Naive thymus-derived CD4-positive, alpha-beta T cell (primary cell): ENCODE measurements at regions of chr18 and their contacts with region 1.

Region 1: DNA sequence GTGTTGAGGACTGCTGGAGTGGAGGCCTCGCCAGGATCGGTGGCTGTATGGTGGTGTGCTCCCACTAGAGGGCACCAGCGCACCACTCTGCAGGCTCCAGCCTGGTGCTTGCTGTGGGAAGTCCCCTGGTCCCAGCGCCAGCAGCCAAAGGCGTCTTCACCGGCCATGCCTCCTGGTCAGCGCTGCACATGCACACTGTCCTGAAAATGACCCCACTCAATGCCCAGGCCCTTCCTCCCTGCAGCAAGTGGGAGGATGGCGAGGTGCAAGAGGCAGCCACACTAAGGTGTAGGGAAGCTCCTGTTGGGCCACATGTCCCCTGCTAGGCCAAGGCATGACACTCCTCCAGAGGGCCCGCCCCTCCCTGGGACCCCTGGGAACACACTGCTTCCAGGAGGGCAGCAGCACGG is 136.5 kb downstream of the CTIF start:
- DNase-seq: peak; percentile 57 to 84 (median 78)
- ATAC-seq: peak; percentile 97
- H3K4me3 ChIP-seq: no peak overlapping the region
- H3K4me3 Mint-ChIP-seq: no peak overlapping the region
- H3K27ac ChIP-seq: no peak overlapping the region
- H3K27ac Mint-ChIP-seq: no peak overlapping the region
- H3K4me1 ChIP-seq: no peaks in the 10 kb centered on the region
- H3K4me1 Mint-ChIP-seq: peaks cover 0 to 12% (median 0%) of the 10 kb centered on the region in 7 donors
- H3K27me3 ChIP-seq: no peaks in the 10 kb centered on the region
- H3K27me3 Mint-ChIP-seq: no peaks in the 10 kb centered on the region

Region 2: DNA sequence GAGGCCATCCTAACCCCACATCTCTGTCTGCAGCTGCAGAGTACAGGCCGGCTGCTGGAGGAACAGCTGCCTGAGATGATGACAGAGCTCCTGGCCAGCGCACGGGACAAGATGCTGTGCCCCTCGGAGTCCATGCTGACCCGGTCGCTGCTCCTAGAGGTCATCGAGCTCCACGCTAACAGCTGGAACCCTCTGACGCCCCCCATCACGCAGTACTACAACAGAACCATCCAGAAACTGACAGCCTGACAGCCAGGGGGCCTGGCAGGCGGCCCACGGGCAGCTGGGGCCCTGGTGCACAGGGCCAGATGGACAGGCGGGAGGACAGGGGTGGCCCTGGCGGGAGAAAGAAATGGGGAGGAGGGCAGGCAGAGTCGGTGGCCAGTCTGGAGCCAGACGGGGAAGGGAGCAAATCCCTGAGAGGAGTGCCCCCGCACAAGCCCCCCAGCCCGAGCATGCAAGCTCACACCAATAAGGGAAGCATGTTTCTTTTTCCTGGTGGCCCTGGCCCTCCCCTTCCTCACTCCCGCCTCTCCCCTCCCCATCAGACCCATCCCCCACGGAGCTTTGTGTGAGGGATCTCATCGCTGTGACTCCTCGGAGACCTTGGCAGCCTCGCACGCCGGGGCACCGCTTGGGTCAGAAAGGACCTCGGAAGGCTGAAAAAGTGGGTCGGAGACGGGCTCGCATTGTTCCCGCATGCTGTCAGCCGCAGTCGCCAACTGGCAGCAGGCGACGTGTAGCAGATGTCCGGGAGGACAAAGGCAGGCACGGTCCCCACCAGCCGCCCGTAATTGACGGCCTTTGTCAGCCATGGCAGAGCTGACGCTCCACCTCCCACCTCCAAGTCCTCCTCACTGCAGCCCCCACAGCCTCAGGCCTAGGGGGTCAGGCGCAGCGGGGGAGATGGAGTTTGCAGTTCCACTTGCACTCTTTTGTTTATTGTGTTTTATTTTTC is 184.2 kb after region 1 on chr18:
- CTCF ChIA-PET with region 1: no interaction called
- POLR2A ChIA-PET with region 1: no interaction called
- intact Hi-C with region 1: no loop called
- DNase-seq: no peak
- ATAC-seq: no peak
- H3K4me3 ChIP-seq: no peak overlapping the region
- H3K4me3 Mint-ChIP-seq: no peak overlapping the region
- H3K27ac ChIP-seq: no peak overlapping the region
- H3K27ac Mint-ChIP-seq: peak overlapping the region in 2 of 9 donors; percentile 25 to 43
- H3K4me1 ChIP-seq: no peaks in the 10 kb centered on the region
- H3K4me1 Mint-ChIP-seq: peaks cover 4 to 23% (median 16%) of the 10 kb centered on the region in 7 donors
- H3K27me3 ChIP-seq: no peaks in the 10 kb centered on the region
- H3K27me3 Mint-ChIP-seq: no peaks in the 10 kb centered on the region

Region 3: DNA sequence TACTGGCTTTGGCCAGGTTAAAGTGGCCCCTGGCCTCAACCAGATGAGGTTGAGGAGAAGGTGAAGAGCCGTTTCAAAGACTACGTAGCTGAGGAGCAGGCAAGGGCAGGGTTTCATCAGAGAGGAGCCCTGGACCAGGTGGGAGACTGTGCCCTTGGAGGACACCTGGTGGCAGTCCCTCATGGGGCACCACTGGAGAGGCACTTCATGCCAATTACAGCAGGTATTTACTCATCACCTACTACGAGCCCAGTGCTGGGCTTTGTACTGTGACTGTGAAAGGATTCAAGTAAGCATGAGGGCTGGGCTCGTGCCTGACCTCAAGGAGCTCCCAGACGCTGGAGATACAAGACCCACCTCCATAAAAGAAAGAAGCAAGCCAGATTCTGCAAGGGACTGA is 237.8 kb after region 1 on chr18:
- CTCF ChIA-PET with region 1: no interaction called
- POLR2A ChIA-PET with region 1: no interaction called
- intact Hi-C with region 1: loop called in 1 of 2 experiments (anchors 5 kb)
- DNase-seq: peak in 4 of 9 donors; percentile 32 to 51 (median 44)
- ATAC-seq: peak; percentile 78
- H3K4me3 ChIP-seq: no peak overlapping the region
- H3K4me3 Mint-ChIP-seq: no peak overlapping the region
- H3K27ac ChIP-seq: no peak overlapping the region
- H3K27ac Mint-ChIP-seq: peak overlapping the region in 2 of 9 donors; percentile 28 to 55
- H3K4me1 ChIP-seq: peaks cover 11 to 19% of the 10 kb centered on the region in 2 donors
- H3K4me1 Mint-ChIP-seq: peaks cover 22 to 43% (median 33%) of the 10 kb centered on the region in 7 donors
- H3K27me3 ChIP-seq: no peaks in the 10 kb centered on the region
- H3K27me3 Mint-ChIP-seq: peaks cover 0 to 1% (median 0%) of the 10 kb centered on the region in 5 donors

Region 4: DNA sequence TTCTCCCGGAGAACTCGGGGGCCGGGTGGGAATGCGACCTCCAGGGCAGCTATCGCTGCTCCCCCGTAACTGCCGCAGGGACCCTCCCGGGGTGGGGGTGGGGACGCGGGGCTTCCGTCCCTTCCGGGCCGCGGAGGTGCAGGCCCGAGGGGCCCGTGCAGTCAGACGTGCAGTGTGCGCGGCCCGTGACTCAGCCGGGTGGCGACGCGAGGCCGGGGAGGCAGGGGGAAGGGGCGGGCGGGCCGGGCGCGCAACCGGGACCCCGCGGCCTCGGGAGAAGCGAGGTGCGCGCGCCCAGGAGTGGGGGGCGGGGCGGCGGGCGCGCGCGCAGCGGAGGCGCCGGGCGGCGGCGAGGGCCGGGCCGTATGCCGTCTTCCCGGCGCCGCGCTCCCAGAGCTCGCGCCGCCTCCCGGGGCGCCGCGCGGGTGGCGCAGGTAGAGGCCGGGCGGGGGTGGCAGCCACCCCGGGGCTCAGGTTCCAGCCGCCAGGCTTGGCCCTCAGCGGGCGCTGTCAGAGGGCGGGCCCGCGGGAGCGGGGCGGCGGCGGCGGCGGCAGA is 300.4 kb after region 1 on chr18:
- CTCF ChIA-PET with region 1: no interaction called
- POLR2A ChIA-PET with region 1: no interaction called
- intact Hi-C with region 1: loop called in 1 of 2 experiments (anchors 1 kb)
- DNase-seq: peak in 8 of 9 donors; percentile 29 to 66 (median 38)
- ATAC-seq: peak; percentile 79
- H3K4me3 ChIP-seq: peak overlapping the region; percentile 50
- H3K4me3 Mint-ChIP-seq: peak overlapping the region in 7 of 10 donors; percentile 35 to 83 (median 59)
- H3K27ac ChIP-seq: no peak overlapping the region
- H3K27ac Mint-ChIP-seq: no peak overlapping the region
- H3K4me1 ChIP-seq: no peaks in the 10 kb centered on the region
- H3K4me1 Mint-ChIP-seq: peaks cover 0 to 16% (median 11%) of the 10 kb centered on the region in 7 donors
- H3K27me3 ChIP-seq: no peaks in the 10 kb centered on the region
- H3K27me3 Mint-ChIP-seq: peaks cover 8 to 65% (median 18%) of the 10 kb centered on the region in 5 donors

Region 5: DNA sequence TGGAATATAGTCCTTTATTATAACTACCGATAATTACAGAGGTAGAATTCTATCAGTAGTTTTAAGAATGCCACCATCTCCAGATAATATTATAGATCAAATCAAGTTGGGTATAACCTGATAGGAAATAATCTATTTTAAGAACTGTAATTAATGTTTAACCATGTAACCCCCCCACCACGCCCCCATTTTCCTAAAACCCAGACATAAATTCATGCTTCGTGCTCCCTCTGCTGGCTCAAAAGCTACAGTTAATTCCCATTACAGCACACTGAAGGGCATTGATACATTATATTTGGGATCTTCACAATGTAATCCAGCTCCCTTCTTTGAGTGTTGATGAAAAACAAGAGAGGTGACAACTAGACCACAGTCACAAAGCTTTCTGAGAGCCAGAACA is 503.4 kb after region 1 on chr18:
- CTCF ChIA-PET with region 1: no interaction called
- POLR2A ChIA-PET with region 1: no interaction called
- intact Hi-C with region 1: loop called (anchors 1 to 5 kb)
- DNase-seq: no peak
- ATAC-seq: no peak
- H3K4me3 ChIP-seq: no peak overlapping the region
- H3K4me3 Mint-ChIP-seq: no peak overlapping the region
- H3K27ac ChIP-seq: no peak overlapping the region
- H3K27ac Mint-ChIP-seq: no peak overlapping the region
- H3K4me1 ChIP-seq: no peaks in the 10 kb centered on the region
- H3K4me1 Mint-ChIP-seq: peaks cover 4 to 21% (median 9%) of the 10 kb centered on the region in 7 donors
- H3K27me3 ChIP-seq: no peaks in the 10 kb centered on the region
- H3K27me3 Mint-ChIP-seq: peaks cover 0 to 15% (median 0%) of the 10 kb centered on the region in 5 donors

Region 6: GRCh38 chr18:49412679-49413078 is 737.3 kb after region 1 on chr18:
- CTCF ChIA-PET with region 1: interaction called, 7 read pairs
- POLR2A ChIA-PET with region 1: no interaction called
- intact Hi-C with region 1: loop called (anchors 1 kb)
- DNase-seq: peak in 3 of 9 donors; percentile 15 to 31 (median 21)
- ATAC-seq: no peak
- H3K4me3 ChIP-seq: no peak overlapping the region
- H3K4me3 Mint-ChIP-seq: peak overlapping the region in 8 of 10 donors; percentile 1 to 61 (median 38)
- H3K27ac ChIP-seq: no peak overlapping the region
- H3K27ac Mint-ChIP-seq: peak overlapping the region; percentile 13 to 83 (median 77)
- H3K4me1 ChIP-seq: peaks cover 0 to 16% of the 10 kb centered on the region in 2 donors
- H3K4me1 Mint-ChIP-seq: peaks cover 13 to 51% (median 47%) of the 10 kb centered on the region in 7 donors
- H3K27me3 ChIP-seq: no peaks in the 10 kb centered on the region
- H3K27me3 Mint-ChIP-seq: no peaks in the 10 kb centered on the region

Region 7: GRCh38 chr18:49555641-49556040 is 880.3 kb after region 1 on chr18:
- CTCF ChIA-PET with region 1: no interaction called
- POLR2A ChIA-PET with region 1: no interaction called
- intact Hi-C with region 1: loop called in 1 of 2 experiments (anchors 5 kb)
- DNase-seq: no peak
- ATAC-seq: no peak
- H3K4me3 ChIP-seq: no peak overlapping the region
- H3K4me3 Mint-ChIP-seq: no peak overlapping the region
- H3K27ac ChIP-seq: no peak overlapping the region
- H3K27ac Mint-ChIP-seq: no peak overlapping the region
- H3K4me1 ChIP-seq: no peaks in the 10 kb centered on the region
- H3K4me1 Mint-ChIP-seq: peaks cover 2 to 6% (median 4%) of the 10 kb centered on the region in 7 donors
- H3K27me3 ChIP-seq: peaks cover 0 to 6% of the 10 kb centered on the region in 2 donors
- H3K27me3 Mint-ChIP-seq: peaks cover 34 to 56% (median 54%) of the 10 kb centered on the region in 5 donors

Region 8: DNA sequence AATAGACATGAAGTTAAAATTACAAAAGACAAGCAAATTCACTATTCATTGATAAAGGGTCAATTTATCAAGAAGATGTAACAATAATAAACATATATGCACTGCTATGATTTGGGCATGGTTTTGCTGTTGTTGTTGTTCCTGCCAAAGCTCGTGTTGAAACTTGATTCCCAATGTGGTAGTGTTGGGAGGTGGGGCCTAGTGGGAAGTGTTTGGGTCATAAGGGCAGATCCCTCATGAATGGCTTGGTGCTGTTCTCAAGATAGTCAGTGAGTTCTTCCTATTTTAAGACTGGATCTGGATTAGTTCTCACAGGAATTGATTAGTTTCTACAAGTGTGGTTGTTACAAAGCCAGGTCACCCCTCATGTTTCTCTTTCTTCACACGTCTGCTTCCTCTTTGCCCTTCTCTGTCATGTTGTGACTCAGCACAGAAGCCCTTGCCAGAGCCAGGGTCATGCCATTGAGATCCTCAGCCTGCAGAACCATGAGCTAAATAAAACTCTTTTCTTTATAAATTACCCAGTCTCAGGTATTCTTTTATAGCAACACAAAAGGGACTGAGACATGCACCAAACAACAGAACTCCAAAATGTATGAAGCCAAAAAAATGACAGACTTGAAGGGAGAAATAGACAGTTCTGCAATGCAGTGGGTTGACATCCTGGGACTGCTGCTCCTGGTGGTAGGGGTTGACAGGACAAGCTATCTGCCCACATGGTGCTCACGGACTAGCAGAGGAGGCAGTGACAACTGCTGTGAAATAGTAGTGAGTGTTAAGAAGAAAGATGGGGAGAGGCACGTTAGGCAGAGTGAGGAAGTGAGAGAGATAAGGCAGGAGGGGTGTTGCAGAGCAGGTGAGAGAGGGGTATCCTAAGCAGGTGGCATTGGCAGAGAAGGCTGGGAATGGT is 1680.9 kb after region 1 on chr18:
- CTCF ChIA-PET with region 1: no interaction called
- POLR2A ChIA-PET with region 1: no interaction called
- intact Hi-C with region 1: loop called in 1 of 2 experiments (anchors 1 kb)
- DNase-seq: no peak
- ATAC-seq: peak; percentile 68
- H3K4me3 ChIP-seq: no peak overlapping the region
- H3K4me3 Mint-ChIP-seq: peak overlapping the region in 4 of 10 donors; percentile 12 to 55 (median 21)
- H3K27ac ChIP-seq: no peak overlapping the region
- H3K27ac Mint-ChIP-seq: peak overlapping the region in 5 of 9 donors; percentile 4 to 66 (median 49)
- H3K4me1 ChIP-seq: peaks cover 0 to 8% of the 10 kb centered on the region in 2 donors
- H3K4me1 Mint-ChIP-seq: peaks cover 0 to 11% (median 6%) of the 10 kb centered on the region in 7 donors
- H3K27me3 ChIP-seq: no peaks in the 10 kb centered on the region
- H3K27me3 Mint-ChIP-seq: peaks cover 11 to 44% (median 23%) of the 10 kb centered on the region in 5 donors